ENCODE measurements at regions of chr1 and their contacts with region 1.

Region 1: DNA sequence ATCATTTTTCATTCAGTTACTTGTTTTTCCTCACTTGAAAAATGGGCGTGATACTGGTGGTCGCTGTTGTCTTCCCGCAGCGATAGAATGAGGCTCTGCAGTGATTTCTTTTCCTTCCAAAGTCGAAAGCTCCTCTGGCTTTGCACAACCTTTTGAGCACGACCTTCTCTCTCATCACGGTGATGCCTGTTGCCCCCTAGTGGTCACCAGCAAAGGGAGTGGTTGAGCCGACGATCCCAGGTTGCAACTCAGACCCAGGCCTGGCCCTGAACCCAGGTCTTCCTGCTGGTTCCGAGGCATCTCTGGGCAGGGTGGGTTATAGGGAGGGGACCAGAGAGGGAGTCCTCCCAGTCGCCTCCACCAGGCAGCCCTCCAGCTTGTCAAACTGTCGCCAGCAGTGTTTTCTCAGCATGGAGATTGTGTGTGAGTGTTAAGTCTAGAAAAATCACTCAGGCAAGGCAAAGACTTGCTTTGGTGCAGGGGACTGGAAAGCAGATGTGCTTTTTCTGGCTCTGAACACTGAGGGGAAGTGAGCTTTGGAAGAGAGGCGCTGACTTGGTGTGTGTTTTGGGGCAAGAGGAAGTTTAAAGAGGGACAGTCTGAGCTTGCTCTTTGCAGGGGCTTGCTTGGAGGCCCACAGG is 285.3 kb downstream of the CAMTA1 start:
- DNase-seq: peak; percentile 1
- H3K4me3 ChIP-seq: peak overlapping the region; percentile 44
- CTCF ChIP-seq: peak; percentile 96

Region 2: GRCh38 chr1:6794164-6794563 is 276.3 kb before region 1 on chr1:
- CTCF ChIA-PET with region 1: interaction called, 43 read pairs
- POLR2A ChIA-PET with region 1: no interaction called
- DNase-seq: peak; percentile 26
- H3K4me3 ChIP-seq: no peak overlapping the region
- CTCF ChIP-seq: peak; percentile 13

Region 3: GRCh38 chr1:7026169-7026568 is 44.3 kb before region 1 on chr1:
- CTCF ChIA-PET with region 1: no interaction called
- POLR2A ChIA-PET with region 1: no interaction called
- DNase-seq: no peak
- H3K4me3 ChIP-seq: no peak overlapping the region
- CTCF ChIP-seq: no peak

Region 4: DNA sequence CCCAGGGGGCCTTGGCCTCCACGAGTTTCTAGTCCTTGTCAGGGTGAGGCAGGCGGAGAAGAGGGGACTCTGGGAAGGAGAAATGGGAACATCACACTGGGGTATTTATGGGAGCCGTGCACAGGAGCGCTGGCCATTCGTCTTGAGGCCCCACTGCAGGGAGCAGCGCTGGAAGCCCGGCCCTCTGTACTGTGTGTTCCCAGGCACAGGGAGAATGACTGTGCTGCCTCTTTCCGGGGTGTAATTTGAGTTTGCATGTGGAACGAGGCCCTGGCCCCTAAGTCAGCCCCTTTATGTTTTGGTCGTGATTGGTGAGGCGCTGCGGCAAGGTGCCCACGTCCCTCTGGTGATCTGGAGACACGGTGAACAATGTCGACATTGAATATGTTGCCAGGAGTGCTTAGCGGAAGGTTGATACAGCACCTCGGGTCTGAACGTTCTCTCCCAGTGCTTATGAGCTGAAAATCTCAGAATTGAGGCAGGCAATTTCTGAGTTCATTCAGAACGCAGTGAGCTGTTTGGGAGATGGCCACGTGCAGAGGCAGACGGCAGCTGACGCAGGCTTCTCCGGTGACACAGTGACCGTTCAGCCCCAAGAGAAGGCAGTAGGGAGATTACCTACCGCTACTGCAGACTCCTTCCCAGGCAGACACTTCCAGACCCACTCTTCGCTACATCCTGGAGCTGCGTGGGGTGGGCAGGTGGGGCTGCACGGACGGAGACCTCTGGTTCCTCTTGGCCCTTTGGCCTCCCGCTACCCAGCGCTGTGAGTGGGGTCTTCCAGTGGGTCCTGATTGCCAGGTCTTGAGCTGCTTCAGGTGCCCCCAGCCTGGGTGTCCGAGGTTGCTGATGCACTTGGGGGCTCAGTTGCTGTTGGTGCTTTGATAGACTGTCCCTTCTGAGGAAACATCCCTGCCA is 19.5 kb before region 1 on chr1:
- CTCF ChIA-PET with region 1: interaction called, 50 read pairs
- POLR2A ChIA-PET with region 1: no interaction called
- DNase-seq: no peak
- H3K4me3 ChIP-seq: no peak overlapping the region
- CTCF ChIP-seq: no peak

Region 5: GRCh38 chr1:7089497-7089896 is 19.0 kb after region 1 on chr1:
- CTCF ChIA-PET with region 1: interaction called, 110 read pairs
- POLR2A ChIA-PET with region 1: no interaction called
- DNase-seq: no peak
- H3K4me3 ChIP-seq: no peak overlapping the region
- CTCF ChIP-seq: no peak

Region 6: GRCh38 chr1:7207875-7208646 is 137.6 kb after region 1 on chr1:
- CTCF ChIA-PET with region 1: interaction called, 11 read pairs
- POLR2A ChIA-PET with region 1: no interaction called
- DNase-seq: no peak
- H3K4me3 ChIP-seq: no peak overlapping the region
- CTCF ChIP-seq: peak; percentile 71